Heart right ventricle (tissue), 16 donors: ENCODE measurements at regions of chr15 and their contacts with region 1.

Region 1: DNA sequence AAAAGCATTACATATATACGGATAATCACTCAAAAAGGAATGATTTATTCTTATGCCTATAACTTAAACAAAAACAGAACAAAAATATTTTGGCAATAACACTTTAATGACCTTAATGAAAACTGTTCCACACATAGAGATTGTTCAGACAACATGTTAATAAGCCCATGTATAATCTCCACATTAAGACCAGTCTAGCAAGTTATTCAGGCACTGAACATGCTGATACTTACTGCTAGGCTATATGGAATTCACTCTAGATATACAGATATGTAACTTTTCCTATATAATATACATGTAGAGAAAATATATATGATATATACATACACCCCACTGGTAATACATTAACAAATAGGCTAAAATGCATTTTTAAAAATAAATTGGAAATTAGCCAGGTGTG is 43.8 kb upstream of the USP50 start:
- DNase-seq: no peak
- ATAC-seq: no peak
- H3K4me3 ChIP-seq: no peak overlapping the region
- H3K27ac ChIP-seq: no peak overlapping the region
- H3K4me1 ChIP-seq: no peaks in the 10 kb centered on the region
- H3K27me3 ChIP-seq: no peaks in the 10 kb centered on the region
- CTCF ChIP-seq: no peak

Region 2: GRCh38 chr15:50330921-50331320 is 259.4 kb before region 1 on chr15:
- intact Hi-C with region 1: no loop called
- DNase-seq: no peak
- ATAC-seq: no peak
- H3K4me3 ChIP-seq: no peak overlapping the region
- H3K27ac ChIP-seq: no peak overlapping the region
- H3K4me1 ChIP-seq: peaks cover 0 to 7% (median 0%) of the 10 kb centered on the region in 9 donors
- H3K27me3 ChIP-seq: no peaks in the 10 kb centered on the region
- CTCF ChIP-seq: no peak

Region 3: GRCh38 chr15:50627351-50628055 is 37.2 kb after region 1 on chr15:
- intact Hi-C with region 1: loop called in 2 of 10 experiments (anchors 5 kb)
- DNase-seq: no peak
- ATAC-seq: peak in 1 of 8 donors; percentile 56
- H3K4me3 ChIP-seq: no peak overlapping the region
- H3K27ac ChIP-seq: peak overlapping the region in 4 of 10 donors; percentile 15 to 33 (median 28)
- H3K4me1 ChIP-seq: peaks cover 0 to 14% (median 2%) of the 10 kb centered on the region in 9 donors
- H3K27me3 ChIP-seq: no peaks in the 10 kb centered on the region
- CTCF ChIP-seq: no peak

Region 4: GRCh38 chr15:50633653-50634052 is 43.4 kb after region 1 on chr15:
- intact Hi-C with region 1: loop called in 2 of 10 experiments (anchors 5 kb)
- DNase-seq: no peak
- ATAC-seq: no peak
- H3K4me3 ChIP-seq: no peak overlapping the region
- H3K27ac ChIP-seq: no peak overlapping the region
- H3K4me1 ChIP-seq: no peaks in the 10 kb centered on the region
- H3K27me3 ChIP-seq: no peaks in the 10 kb centered on the region
- CTCF ChIP-seq: no peak

Region 5: DNA sequence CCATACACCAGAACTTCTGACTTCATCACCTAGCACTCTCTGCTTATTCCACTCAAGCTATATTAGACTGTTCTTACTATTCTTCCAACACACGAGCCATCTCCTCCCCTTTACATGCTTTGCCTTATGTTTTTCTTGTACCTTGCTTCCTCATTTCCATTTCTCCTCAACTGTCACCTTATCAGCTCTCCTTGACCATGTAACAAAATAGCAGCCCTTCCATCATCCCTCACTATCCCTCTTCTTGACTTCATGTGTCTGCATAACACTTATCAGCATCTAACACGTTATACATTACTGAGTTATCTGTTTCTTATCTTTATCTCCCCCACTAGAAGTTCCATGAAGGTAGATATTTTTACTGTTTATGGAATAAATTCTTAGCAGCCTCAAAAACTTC is 51.0 kb after region 1 on chr15:
- intact Hi-C with region 1: loop called in 1 of 10 experiments (anchors 10 kb)
- DNase-seq: no peak
- ATAC-seq: no peak
- H3K4me3 ChIP-seq: no peak overlapping the region
- H3K27ac ChIP-seq: no peak overlapping the region
- H3K4me1 ChIP-seq: peaks cover 0 to 9% (median 0%) of the 10 kb centered on the region in 9 donors
- H3K27me3 ChIP-seq: no peaks in the 10 kb centered on the region
- CTCF ChIP-seq: no peak

Region 6: GRCh38 chr15:50744601-50745000 is 154.3 kb after region 1 on chr15:
- intact Hi-C with region 1: no loop called
- DNase-seq: no peak
- ATAC-seq: no peak
- H3K4me3 ChIP-seq: no peak overlapping the region
- H3K27ac ChIP-seq: no peak overlapping the region
- H3K4me1 ChIP-seq: peaks cover 0 to 7% (median 4%) of the 10 kb centered on the region in 9 donors
- H3K27me3 ChIP-seq: no peaks in the 10 kb centered on the region
- CTCF ChIP-seq: no peak